Mammary epithelial cell (primary cell): ENCODE measurements at regions of chr6 and their contacts with region 1.

Region 1: DNA sequence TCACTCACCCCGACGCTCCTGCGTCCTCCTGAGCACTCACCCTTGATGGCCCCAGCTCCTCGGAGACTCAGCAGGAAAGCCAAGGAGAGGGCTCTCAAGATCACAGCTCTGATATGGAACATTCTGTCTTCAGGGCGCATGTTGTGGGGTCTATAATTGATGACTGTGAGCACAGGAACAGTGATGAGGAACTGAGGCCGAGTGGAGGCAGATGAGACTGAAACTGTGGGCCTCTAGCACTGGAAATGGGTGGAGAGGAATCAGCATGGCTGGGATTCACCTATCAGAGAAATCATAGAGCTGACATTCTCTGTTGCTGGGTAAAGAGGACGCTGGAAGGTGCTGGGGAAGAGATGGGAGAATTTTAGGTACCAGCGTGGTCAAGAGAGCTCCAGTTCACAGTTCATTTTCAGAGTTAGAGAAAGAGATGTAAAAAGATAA is at the start of gene HLA-DPA1:
- DNase-seq: peak; percentile 24
- H3K4me3 ChIP-seq: no peak within 1 kb of the TSS
- H3K27ac ChIP-seq: no peak within 1 kb of the TSS
- H3K4me1 ChIP-seq: no peaks in the 10 kb centered on the region
- H3K27me3 ChIP-seq: peaks cover 2% of the 10 kb centered on the region
- CTCF ChIP-seq: no peak
- total RNA-seq, gene HLA-DPA1: 0.33 TPM in 1 of 2 donors, not detected in the other

Region 2: DNA sequence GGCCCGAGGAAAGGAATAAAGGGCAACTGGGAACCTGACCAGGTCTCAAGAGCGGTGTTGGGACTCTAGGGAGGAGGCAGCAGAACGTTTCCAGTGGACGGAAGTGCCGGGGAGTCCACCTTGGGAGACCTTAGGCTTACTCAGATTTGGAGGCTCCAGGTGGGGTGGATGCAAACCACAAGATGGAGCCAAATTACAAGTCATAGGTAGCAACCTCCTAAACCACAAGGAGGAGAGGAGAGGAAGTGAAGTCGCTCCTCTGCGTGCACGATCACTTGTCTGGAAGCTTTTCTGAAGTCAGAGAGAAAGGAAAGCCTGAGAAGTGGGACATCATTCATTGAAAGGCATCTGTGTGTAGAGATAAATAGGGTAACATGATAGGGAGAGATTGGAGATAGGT is 73.4 kb before region 1 on chr6:
- CTCF ChIA-PET with region 1: no interaction called
- dilution Hi-C with region 1: loop called (anchors 5 kb)
- in situ Hi-C with region 1: no loop called
- intact Hi-C with region 1: no loop called
- DNase-seq: peak; percentile 29
- H3K4me3 ChIP-seq: no peak overlapping the region
- H3K27ac ChIP-seq: no peak overlapping the region
- H3K4me1 ChIP-seq: no peaks in the 10 kb centered on the region
- H3K27me3 ChIP-seq: peaks cover 7% of the 10 kb centered on the region
- CTCF ChIP-seq: peak; percentile 21 to 32

Region 3: GRCh38 chr6:33036535-33036934 is 36.9 kb before region 1 on chr6:
- CTCF ChIA-PET with region 1: no interaction called
- dilution Hi-C with region 1: loop called (anchors 5 kb)
- in situ Hi-C with region 1: no loop called
- intact Hi-C with region 1: no loop called
- DNase-seq: no peak
- H3K4me3 ChIP-seq: no peak overlapping the region
- H3K27ac ChIP-seq: no peak overlapping the region
- H3K4me1 ChIP-seq: no peaks in the 10 kb centered on the region
- H3K27me3 ChIP-seq: no peaks in the 10 kb centered on the region
- CTCF ChIP-seq: no peak